Ovary (tissue), 10 donors: ENCODE measurements at regions of chr7 and their contacts with region 1.

Region 1: DNA sequence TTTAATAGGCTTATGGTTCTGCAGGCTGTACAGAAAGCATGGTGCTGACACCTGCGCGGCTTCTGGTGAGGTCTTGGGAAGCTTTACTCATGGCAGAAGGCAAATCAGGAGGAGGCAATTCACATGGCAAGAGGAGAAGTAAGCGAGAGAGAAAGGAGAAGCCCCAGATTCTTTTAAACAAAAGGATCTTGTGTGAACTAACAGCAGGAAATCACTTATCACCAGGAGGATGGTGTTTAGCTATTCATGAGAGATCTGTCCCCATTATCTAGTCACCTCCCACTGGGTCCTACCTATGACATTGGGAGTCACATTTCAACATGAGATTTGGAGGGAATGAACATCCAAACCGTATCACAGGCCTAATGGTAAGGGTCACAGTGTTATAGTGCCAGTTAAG is 678.0 kb upstream of the KCND2 start:
- DNase-seq: no peak
- H3K4me3 ChIP-seq: no peak overlapping the region
- H3K27ac ChIP-seq: no peak overlapping the region
- H3K4me1 ChIP-seq: no peaks in the 10 kb centered on the region
- H3K27me3 ChIP-seq: no peaks in the 10 kb centered on the region
- CTCF ChIP-seq: no peak
- EP300 ChIP-seq: no peak
- POLR2A ChIP-seq: no peak

Region 2: DNA sequence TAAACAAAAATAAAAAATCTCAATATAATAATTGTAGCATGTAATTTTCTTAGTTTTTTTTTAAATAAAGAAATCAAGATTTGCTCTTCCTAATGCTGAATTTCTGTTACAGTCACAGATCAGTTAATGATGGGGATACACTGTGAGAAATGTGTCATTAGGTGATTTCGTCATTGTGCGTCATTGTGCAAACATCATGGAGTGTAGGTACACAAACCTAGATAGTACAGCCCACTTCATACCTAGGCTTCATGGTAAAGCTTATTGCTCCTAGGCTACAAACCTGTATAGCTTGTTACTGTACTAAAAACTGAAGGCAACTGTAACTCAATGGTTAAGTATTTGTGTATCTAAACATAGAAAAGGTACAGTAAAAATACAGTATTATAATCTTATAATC is 1485.3 kb before region 1 on chr7:
- intact Hi-C with region 1: loop called in 1 of 4 experiments (anchors 10 kb)
- DNase-seq: no peak
- H3K4me3 ChIP-seq: no peak overlapping the region
- H3K27ac ChIP-seq: no peak overlapping the region
- H3K4me1 ChIP-seq: no peaks in the 10 kb centered on the region
- H3K27me3 ChIP-seq: no peaks in the 10 kb centered on the region
- CTCF ChIP-seq: no peak
- EP300 ChIP-seq: no peak
- POLR2A ChIP-seq: no peak